ENCODE measurements at regions of chr4 and their contacts with region 1.

Region 1: GRCh38 chr4:13548984-13549546 is 4.8 kb upstream of the NKX3-2 start:
- DNase-seq: peak; percentile 79 to 83
- ATAC-seq: peak; percentile 71 to 85 (median 74)
- H3K4me3 ChIP-seq: peak overlapping the region; percentile 41
- H3K27ac ChIP-seq: no peak overlapping the region
- H3K4me1 ChIP-seq: peaks cover 9% of the 10 kb centered on the region
- H3K27me3 ChIP-seq: peaks cover 0 to 77% (median 27%) of the 10 kb centered on the region in 3 donors
- CTCF ChIP-seq: peak; percentile 93

Region 2: GRCh38 chr4:12729384-12729783 is 819.7 kb before region 1 on chr4:
- intact Hi-C with region 1: loop called (anchors 2 to 5 kb)
- DNase-seq: no peak
- ATAC-seq: no peak
- H3K4me3 ChIP-seq: no peak overlapping the region
- H3K27ac ChIP-seq: no peak overlapping the region
- H3K4me1 ChIP-seq: no peaks in the 10 kb centered on the region
- H3K27me3 ChIP-seq: peaks cover 0 to 5% (median 3%) of the 10 kb centered on the region in 3 donors
- CTCF ChIP-seq: peak; percentile 35

Region 3: DNA sequence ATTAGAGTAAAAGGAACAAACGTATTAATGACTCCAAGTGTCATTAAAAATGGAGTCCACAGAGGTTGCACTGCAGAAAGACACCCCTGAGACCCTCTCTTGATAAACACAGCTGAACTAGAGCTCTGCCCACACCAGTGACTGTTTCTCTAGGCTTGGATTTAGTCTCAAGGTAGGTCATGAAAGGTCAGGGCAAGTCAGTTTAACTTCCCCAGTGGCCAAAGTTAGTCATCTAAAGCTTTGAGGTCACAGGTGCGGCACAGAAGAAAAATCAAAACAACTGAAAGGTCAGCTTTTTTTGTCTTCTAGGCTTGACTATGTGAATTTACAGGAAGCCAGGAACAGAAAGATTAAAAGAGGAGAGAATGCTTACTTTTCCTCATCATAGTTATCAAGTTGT is 814.5 kb before region 1 on chr4:
- intact Hi-C with region 1: loop called (anchors 2 to 5 kb)
- DNase-seq: no peak
- ATAC-seq: no peak
- H3K4me3 ChIP-seq: no peak overlapping the region
- H3K27ac ChIP-seq: no peak overlapping the region
- H3K4me1 ChIP-seq: no peaks in the 10 kb centered on the region
- H3K27me3 ChIP-seq: peaks cover 0 to 5% (median 3%) of the 10 kb centered on the region in 3 donors
- CTCF ChIP-seq: no peak

Region 4: GRCh38 chr4:12852338-12853307 is 696.4 kb before region 1 on chr4:
- intact Hi-C with region 1: loop called (anchors 2 to 5 kb)
- DNase-seq: no peak
- ATAC-seq: peak in 2 of 4 donors; percentile 51 to 69
- H3K4me3 ChIP-seq: no peak overlapping the region
- H3K27ac ChIP-seq: no peak overlapping the region
- H3K4me1 ChIP-seq: no peaks in the 10 kb centered on the region
- H3K27me3 ChIP-seq: peaks cover 0 to 9% (median 3%) of the 10 kb centered on the region in 3 donors
- CTCF ChIP-seq: peak; percentile 53